Activated CD8-positive, alpha-beta memory T cell treated with anti-CD3 and anti-CD28 coated beads, Interleukin-2, amount 10 ng/mL, durations not matched to agents 7 days and 5 days (primary cell): ENCODE measurements at regions of chr2 and their contacts with region 1.

Region 1: DNA sequence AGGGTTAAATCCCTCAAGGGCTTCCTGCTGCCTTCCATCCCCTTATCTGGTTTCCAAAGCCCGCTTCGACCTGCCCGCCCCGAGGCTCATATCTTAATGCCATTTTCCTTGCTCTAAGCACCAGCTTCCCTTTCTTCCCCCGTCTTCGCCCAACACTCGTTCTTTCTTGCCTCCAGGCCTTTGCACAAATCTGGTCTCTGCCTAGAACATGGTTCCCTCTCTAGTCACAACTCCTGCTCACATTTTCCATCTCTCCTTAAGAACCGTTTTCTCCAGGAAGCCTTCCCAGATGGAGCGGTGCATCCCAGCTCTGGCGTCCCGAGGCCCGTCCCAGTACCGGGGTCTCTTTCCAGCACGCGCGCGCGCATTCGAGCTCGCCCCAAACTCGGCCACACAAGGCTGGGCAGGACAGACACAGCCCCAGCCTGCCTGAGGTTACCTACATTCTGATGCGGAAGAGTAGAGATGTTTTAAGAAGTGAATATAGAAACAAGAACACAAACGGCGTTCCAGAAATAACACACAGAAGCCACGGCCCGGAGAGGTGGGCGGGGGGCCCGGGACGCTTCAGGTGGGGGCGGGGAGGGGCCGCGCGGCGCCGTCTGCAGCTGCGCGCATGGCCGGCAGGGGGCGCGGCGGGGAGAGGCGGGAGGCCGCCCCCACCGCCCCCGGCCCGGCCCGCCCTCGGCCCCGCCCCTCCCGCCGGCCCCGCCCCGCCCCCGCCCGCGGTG is at the start of gene DGKD:
- DNase-seq: peak; percentile 75
- ATAC-seq: peak; percentile 80
- H3K4me3 Mint-ChIP-seq: peak within 1 kb of the TSS; percentile 84
- H3K27ac Mint-ChIP-seq: peak within 1 kb of the TSS; percentile 96
- H3K4me1 Mint-ChIP-seq: peaks cover 69% of the 10 kb centered on the region
- H3K27me3 Mint-ChIP-seq: no peaks in the 10 kb centered on the region
- total RNA-seq, gene DGKD: 42.3 to 92.4 TPM

Region 2: DNA sequence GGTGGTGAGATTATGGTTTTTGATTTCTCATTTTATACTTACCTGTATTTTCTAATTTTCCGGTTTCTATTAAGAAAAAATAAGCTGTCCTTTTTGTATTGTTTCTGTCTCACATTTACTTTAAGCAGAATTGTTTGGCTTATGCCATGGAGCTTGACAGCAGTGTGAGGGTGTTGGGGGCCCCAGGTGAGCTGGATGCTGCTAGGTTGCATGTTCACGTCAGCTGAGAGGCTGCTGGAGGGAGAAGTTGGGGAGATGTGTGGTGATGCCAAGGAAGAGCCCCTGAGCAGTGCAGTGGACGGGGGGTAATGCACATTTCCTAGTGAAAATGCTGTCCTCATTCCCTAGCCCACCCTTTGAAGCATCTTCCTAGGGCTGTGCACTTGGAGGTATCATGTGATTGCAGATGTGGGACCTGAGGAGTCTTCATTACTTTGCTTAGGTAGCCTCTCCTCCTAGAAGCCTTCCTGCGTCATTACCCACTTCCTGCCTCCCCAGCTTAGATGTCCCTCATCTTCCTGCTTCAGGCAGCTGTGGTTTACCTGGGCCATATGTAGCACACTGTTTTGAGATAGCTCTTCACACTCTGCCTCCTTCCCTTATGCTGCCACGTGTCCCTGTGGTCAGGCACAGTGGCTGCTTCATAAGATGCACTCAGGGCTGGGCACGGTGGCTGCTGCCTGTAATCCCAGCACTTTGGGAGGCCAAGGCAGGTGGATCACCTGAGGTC is 86.3 kb before region 1 on chr2:
- CTCF ChIA-PET with region 1: interaction called, 23 read pairs
- DNase-seq: peak; percentile 96
- ATAC-seq: peak; percentile 94
- H3K4me3 Mint-ChIP-seq: peak overlapping the region; percentile 70
- H3K27ac Mint-ChIP-seq: peak overlapping the region; percentile 98
- H3K4me1 Mint-ChIP-seq: peaks cover 71% of the 10 kb centered on the region
- H3K27me3 Mint-ChIP-seq: no peaks in the 10 kb centered on the region

Region 3: DNA sequence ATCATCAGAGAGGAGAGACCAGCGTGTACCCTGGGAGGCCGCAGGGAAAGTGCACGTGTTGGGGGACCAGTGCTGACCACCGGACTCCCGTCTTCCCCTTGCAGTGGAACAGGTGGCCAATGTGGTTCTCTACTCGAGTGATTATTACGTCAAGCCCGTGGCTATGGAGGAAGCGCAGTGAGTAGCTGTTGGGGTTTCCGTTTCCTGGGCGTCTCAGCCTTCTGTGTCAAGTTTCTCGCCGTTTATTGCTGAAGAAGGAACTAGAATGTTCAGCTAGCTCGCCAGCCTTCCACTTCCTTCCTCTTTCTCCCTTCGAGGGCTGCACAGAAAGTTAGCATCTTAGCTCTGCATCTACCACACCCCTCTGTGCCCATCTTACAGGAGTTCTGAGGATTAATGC is 22.4 kb before region 1 on chr2:
- CTCF ChIA-PET with region 1: interaction called, 23 read pairs
- DNase-seq: peak; percentile 93
- ATAC-seq: peak; percentile 94
- H3K4me3 Mint-ChIP-seq: peak overlapping the region; percentile 46
- H3K27ac Mint-ChIP-seq: peak overlapping the region; percentile 96
- H3K4me1 Mint-ChIP-seq: peaks cover 47% of the 10 kb centered on the region
- H3K27me3 Mint-ChIP-seq: no peaks in the 10 kb centered on the region

Region 4: GRCh38 chr2:233336541-233336940 is 17.4 kb before region 1 on chr2:
- CTCF ChIA-PET with region 1: interaction called, 23 read pairs
- DNase-seq: no peak
- ATAC-seq: no peak
- H3K4me3 Mint-ChIP-seq: no peak overlapping the region
- H3K27ac Mint-ChIP-seq: no peak overlapping the region
- H3K4me1 Mint-ChIP-seq: peaks cover 32% of the 10 kb centered on the region
- H3K27me3 Mint-ChIP-seq: no peaks in the 10 kb centered on the region

Region 5: DNA sequence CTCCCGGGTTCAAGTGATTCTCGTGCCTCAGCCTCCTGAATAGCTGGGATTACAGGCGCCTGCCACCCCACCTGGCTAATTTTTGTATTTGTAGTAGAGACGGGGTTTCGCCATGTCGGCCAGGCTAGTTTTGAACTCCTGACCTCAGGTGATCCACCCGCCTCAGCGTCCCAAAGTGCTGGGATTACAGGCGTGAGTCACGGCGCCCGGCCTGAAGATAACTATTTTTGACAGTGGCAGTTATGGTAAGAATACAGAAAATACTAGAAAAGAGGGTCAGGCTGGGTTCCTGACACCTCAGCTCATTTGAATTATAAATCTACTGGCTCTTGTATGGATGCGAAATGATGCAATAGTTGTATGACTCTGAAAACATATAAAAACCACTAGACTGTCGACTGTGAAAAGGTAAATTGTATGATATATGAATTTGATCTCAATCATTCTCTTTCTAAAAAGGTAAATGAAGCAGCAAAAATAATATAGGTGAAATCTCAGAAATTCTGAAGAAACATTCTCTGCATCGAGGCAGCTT is 10.7 kb before region 1 on chr2:
- CTCF ChIA-PET with region 1: interaction called, 13 read pairs
- DNase-seq: no peak
- ATAC-seq: no peak
- H3K4me3 Mint-ChIP-seq: no peak overlapping the region
- H3K27ac Mint-ChIP-seq: no peak overlapping the region
- H3K4me1 Mint-ChIP-seq: no peaks in the 10 kb centered on the region
- H3K27me3 Mint-ChIP-seq: peaks cover 7% of the 10 kb centered on the region

Region 6: DNA sequence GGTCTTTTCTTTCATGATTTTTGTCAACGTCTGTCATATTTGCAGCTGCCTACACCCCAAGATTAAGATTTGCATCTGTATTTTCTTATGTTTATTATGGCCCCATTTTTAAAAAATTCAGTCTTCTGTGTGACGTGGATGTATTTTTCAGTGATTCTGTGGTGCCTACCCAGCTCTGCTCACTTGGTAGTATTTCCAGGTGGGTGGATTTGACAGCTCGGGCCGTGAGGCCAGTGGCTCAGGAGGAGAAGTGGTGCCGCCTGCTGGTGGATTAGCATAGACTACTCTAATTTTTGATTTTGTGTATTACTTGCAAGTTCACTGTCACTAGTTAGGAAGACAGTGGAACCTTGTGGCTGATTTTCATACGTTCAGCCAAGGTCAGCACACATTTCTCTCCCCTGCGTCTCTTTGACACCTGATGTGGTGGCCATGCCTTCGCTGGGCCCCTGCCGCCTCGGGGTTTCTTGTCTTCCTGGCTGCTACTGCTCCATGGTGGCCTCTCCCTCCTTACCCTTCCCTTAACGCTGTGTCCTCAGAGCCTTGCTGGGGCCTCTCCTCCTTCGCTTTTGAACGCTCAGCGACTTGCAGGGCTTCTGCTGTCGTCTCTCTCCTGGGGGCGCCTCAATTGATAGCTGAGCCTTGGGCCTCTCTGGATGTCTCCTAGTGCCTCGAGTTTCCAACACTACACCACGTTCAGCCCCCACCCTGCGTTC is 89.7 kb after region 1 on chr2:
- CTCF ChIA-PET with region 1: interaction called, 21 read pairs
- DNase-seq: peak; percentile 89
- ATAC-seq: peak; percentile 88
- H3K4me3 Mint-ChIP-seq: no peak overlapping the region
- H3K27ac Mint-ChIP-seq: peak overlapping the region; percentile 13
- H3K4me1 Mint-ChIP-seq: peaks cover 16% of the 10 kb centered on the region
- H3K27me3 Mint-ChIP-seq: no peaks in the 10 kb centered on the region